ENCODE measurements at regions of chr12 and their contacts with region 1.

Region 1: DNA sequence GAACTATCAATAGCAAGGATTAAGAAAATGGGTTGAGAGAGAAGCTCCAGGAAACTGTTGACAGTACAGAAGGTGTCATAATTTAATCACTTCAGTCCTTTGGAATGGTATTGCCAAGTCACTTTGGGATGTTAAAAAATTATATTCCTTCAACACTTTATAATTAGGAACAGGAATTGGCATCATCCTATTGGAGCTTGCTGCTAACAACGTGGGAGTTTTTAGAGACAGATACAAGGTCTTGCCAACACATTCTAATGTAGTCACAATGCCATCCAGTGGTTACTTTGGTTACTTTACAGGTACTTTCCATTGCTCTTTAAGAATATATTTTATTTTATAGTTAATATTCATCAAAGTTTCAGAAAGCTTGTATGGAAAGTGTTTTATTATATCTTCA is 310.1 kb downstream of the SYT1 start:
- DNase-seq: peak; percentile 81
- H3K4me3 ChIP-seq: no peak overlapping the region
- H3K27ac ChIP-seq: no peak overlapping the region
- H3K4me1 ChIP-seq: no peaks in the 10 kb centered on the region
- H3K27me3 ChIP-seq: no peaks in the 10 kb centered on the region
- CTCF ChIP-seq: peak in 1 of 2 donors; percentile 29
- POLR2A ChIP-seq: no peak

Region 2: DNA sequence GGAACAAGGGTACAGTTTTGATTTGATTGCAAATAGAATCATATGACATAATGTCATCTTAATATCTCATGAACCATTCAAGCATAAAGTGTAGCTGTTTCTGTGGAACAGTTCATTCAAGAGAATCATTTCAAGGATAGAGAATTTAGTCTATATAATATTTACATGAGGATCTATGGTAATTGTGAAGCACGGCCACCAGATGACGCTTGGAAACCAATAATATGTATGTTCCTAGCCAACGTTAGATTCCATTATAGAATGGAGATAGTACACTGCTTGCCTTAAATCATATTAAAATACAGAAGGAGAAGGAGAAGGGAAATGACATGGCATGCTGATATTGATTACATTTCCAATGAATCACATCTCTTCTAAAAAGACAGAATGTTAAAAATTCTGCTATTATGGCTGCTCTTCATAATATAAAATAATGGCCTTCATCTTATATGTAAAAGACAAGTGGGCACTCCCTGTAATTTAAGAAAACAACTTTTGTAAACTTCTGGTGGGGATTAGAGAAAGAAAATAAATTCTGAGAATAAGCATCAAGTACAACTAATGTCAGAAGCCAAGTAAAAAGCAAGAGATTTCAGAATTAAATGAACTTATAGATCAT is 993.0 kb before region 1 on chr12:
- CTCF ChIA-PET with region 1: interaction called, 16 read pairs
- POLR2A ChIA-PET with region 1: no interaction called
- dilution Hi-C with region 1: no loop called
- intact Hi-C with region 1: loop called (anchors 10 kb)
- DNase-seq: peak; percentile 56
- H3K4me3 ChIP-seq: no peak overlapping the region
- H3K27ac ChIP-seq: no peak overlapping the region
- H3K4me1 ChIP-seq: no peaks in the 10 kb centered on the region
- H3K27me3 ChIP-seq: no peaks in the 10 kb centered on the region
- CTCF ChIP-seq: peak in 1 of 2 donors; percentile 19
- POLR2A ChIP-seq: no peak

Region 3: GRCh38 chr12:78392918-78393317 is 781.7 kb before region 1 on chr12:
- CTCF ChIA-PET with region 1: interaction called, 15 read pairs
- POLR2A ChIA-PET with region 1: no interaction called
- dilution Hi-C with region 1: no loop called
- intact Hi-C with region 1: no loop called
- DNase-seq: peak; percentile 2
- H3K4me3 ChIP-seq: no peak overlapping the region
- H3K27ac ChIP-seq: no peak overlapping the region
- H3K4me1 ChIP-seq: no peaks in the 10 kb centered on the region
- H3K27me3 ChIP-seq: peaks cover 0 to 8% of the 10 kb centered on the region in 2 experiments
- CTCF ChIP-seq: no peak
- POLR2A ChIP-seq: no peak

Region 4: DNA sequence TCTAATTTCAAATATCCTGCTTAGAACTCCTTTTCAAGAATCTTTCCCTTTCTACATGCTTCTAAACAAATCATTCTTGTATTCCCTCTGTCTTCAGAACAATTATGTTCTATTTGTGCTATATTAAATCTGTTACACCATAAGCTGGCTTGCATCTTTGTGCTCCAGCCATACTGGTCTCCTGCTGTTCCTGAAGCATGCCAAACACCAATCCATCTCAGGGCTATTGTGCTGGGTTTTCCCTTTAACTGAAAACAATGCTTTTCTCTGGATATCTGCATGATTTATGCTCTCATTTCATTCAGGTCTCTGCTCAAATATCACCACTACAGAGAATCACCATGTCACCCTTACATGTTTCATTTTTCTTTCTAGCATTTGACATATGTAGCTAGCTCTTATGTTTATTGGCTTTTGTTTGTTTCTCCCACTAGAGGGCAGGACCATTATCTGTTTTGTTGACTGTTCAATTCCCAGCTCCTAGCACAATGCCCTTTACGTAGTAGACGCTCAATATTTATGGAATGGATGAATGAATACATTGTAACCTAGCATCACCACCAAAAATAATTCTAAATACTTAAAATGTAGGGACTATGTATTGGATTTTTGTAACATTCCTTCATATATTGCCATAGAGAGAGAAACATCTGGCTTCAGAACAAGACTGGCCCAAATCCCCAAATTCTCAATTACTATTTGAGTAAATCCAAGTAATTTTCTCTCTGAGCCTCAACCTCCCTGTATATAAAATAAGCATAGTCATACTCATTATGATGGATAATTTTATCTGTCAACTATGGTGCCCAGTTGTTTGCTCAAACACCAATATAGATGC is 612.0 kb before region 1 on chr12:
- CTCF ChIA-PET with region 1: interaction called, 49 read pairs
- POLR2A ChIA-PET with region 1: no interaction called
- dilution Hi-C with region 1: no loop called
- intact Hi-C with region 1: loop called (anchors 1 kb)
- DNase-seq: peak; percentile 46
- H3K4me3 ChIP-seq: no peak overlapping the region
- H3K27ac ChIP-seq: no peak overlapping the region
- H3K4me1 ChIP-seq: no peaks in the 10 kb centered on the region
- H3K27me3 ChIP-seq: peaks cover 5% of the 10 kb centered on the region in 2 experiments
- CTCF ChIP-seq: peak in 1 of 2 donors; percentile 32
- POLR2A ChIP-seq: no peak

Region 5: DNA sequence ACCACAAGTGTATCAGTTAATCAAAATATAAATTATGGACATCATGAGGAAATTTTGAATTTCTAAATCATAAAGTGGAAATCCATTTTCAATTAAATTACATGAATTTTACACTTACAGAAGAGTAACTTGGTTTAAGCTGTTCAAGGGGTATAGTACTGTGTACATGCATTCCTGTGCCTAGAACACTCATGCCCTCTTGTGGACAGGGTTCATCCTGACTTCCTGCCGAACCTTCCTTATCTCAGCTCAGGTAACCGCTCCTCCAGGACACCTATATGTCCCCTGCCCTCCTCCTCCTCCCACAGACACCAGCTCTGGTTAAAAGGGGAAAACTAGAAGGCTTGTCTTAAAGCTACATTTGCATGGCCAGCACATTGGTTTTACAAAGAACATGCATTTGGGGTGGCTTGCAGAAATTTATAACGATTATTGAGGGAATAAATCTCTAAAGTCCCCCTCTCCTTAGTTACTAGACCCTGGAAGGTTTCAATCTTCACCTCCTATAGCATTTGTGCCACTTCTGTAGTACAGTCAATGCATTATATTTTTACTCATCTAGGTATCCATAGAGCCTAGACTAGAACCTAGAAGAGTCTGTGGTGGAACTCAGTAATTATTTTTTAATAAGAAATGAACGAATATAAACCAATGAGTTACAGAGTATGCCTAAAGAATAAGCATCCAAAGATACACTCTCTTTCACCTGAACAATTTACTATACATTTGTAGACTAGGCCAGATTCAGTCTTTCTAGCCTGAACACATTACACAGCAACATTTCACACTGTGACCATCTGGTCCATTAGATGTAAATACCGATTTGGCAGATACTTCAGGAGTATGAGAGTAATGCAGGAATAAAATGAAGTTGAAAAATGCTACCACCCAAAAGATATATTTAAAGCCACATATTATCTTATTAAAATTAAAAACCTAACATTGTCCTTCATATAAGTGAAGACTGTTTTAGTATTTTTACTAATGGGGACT is 170.5 kb after region 1 on chr12:
- CTCF ChIA-PET with region 1: interaction called, 27 read pairs
- POLR2A ChIA-PET with region 1: no interaction called
- dilution Hi-C with region 1: no loop called
- intact Hi-C with region 1: loop called (anchors 5 kb)
- DNase-seq: peak; percentile 54
- H3K4me3 ChIP-seq: no peak overlapping the region
- H3K27ac ChIP-seq: no peak overlapping the region
- H3K4me1 ChIP-seq: no peaks in the 10 kb centered on the region
- H3K27me3 ChIP-seq: peaks cover 0 to 2% of the 10 kb centered on the region in 2 experiments
- CTCF ChIP-seq: peak; percentile 35 to 51
- POLR2A ChIP-seq: no peak

Measured in endothelial cell of umbilical vein (primary cell).